ENCODE measurements at regions of chr2 and their contacts with region 1.

Region 1: GRCh38 chr2:136384531-136385303 is 266.8 kb upstream of the CXCR4 start:
- DNase-seq: peak; percentile 39
- ATAC-seq: peak; percentile 99
- H3K4me3 ChIP-seq: no peak overlapping the region
- H3K27ac ChIP-seq: no peak overlapping the region
- H3K4me1 ChIP-seq: no peaks in the 10 kb centered on the region
- H3K27me3 ChIP-seq: peaks cover 16% of the 10 kb centered on the region; the same call in 1 of the 2 replicates
- CTCF ChIP-seq: peak; percentile 68 to 76 (median 69)
- POLR2A ChIP-seq: no peak
- RAD21 ChIP-seq: peak; percentile 89

Region 2: GRCh38 chr2:134988994-134989605 is 1395.6 kb before region 1 on chr2:
- CTCF ChIA-PET with region 1: interaction called, 19 read pairs
- POLR2A ChIA-PET with region 1: no interaction called
- RAD21 ChIA-PET with region 1: interaction called in 1 of 2 experiments, 4 read pairs
- intact Hi-C with region 1: no loop called
- DNase-seq: peak; percentile 18
- ATAC-seq: peak; percentile 85
- H3K4me3 ChIP-seq: no peak overlapping the region
- H3K27ac ChIP-seq: no peak overlapping the region
- H3K4me1 ChIP-seq: no peaks in the 10 kb centered on the region
- H3K27me3 ChIP-seq: peaks cover 21% of the 10 kb centered on the region; the same call in 1 of the 2 replicates
- CTCF ChIP-seq: peak; percentile 31 to 65 (median 45); a peak in 4 of 6 replicates
- POLR2A ChIP-seq: no peak
- RAD21 ChIP-seq: peak; percentile 71

Region 3: GRCh38 chr2:135818937-135819610 is 565.6 kb before region 1 on chr2:
- CTCF ChIA-PET with region 1: interaction called, 4 read pairs
- POLR2A ChIA-PET with region 1: no interaction called
- RAD21 ChIA-PET with region 1: no interaction called
- intact Hi-C with region 1: loop called (anchors 10 kb)
- DNase-seq: peak; percentile 21
- ATAC-seq: peak; percentile 95
- H3K4me3 ChIP-seq: no peak overlapping the region
- H3K27ac ChIP-seq: no peak overlapping the region
- H3K4me1 ChIP-seq: no peaks in the 10 kb centered on the region
- H3K27me3 ChIP-seq: no peaks in the 10 kb centered on the region
- CTCF ChIP-seq: peak; percentile 66 to 75 (median 68); a peak in 5 of 6 replicates
- POLR2A ChIP-seq: no peak
- RAD21 ChIP-seq: peak; percentile 69

Region 4: DNA sequence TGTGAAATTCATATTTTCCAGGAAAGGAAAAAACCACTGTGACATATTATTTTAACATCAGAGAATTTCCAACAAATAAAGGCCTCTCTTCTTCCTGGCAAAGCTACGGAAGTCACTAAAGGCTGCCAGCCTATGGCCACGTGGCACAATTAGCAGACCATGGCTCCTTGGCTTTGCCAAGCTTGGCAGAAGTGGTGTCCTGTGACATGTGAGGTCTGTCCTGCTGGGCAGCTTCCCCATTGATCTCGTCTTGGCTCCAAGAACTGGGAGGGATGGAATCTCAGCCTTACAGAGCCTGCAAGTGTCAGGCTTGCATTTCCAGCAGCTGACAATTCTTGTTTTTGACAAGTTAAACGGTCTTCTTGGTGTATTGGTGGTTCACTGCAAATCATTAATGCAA is 153.8 kb after region 1 on chr2:
- CTCF ChIA-PET with region 1: no interaction called
- POLR2A ChIA-PET with region 1: no interaction called
- RAD21 ChIA-PET with region 1: no interaction called
- intact Hi-C with region 1: no loop called
- DNase-seq: no peak
- ATAC-seq: no peak
- H3K4me3 ChIP-seq: no peak overlapping the region
- H3K27ac ChIP-seq: no peak overlapping the region
- H3K4me1 ChIP-seq: no peaks in the 10 kb centered on the region
- H3K27me3 ChIP-seq: no peaks in the 10 kb centered on the region
- CTCF ChIP-seq: no peak
- POLR2A ChIP-seq: no peak
- RAD21 ChIP-seq: no peak

Region 5: DNA sequence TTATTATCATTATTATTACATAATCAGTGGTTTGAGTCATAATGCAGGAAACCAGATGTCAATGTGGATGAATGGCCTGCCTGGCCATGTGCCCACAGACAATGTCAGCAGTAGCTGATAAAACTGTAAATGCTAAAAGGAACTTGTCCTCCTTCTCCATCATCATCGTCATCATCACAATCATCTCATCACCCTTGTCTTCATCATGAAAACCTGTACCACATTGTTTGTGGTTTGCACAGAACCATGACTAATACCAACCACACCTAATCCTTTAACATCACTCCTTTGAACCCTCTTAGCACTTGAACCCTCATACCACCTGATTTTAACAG is 1675.6 kb after region 1 on chr2:
- CTCF ChIA-PET with region 1: no interaction called
- POLR2A ChIA-PET with region 1: no interaction called
- RAD21 ChIA-PET with region 1: no interaction called
- intact Hi-C with region 1: no loop called
- DNase-seq: no peak
- ATAC-seq: no peak
- H3K4me3 ChIP-seq: no peak overlapping the region
- H3K27ac ChIP-seq: no peak overlapping the region
- H3K4me1 ChIP-seq: peaks cover 0 to 4% of the 10 kb centered on the region in 2 experiments; a peak in 1 of 4 replicates
- H3K27me3 ChIP-seq: no peaks in the 10 kb centered on the region
- CTCF ChIP-seq: no peak
- POLR2A ChIP-seq: no peak
- RAD21 ChIP-seq: no peak

Measured in HCT116 (cell line).